ENCODE measurements at regions of chr1 and their contacts with region 1.

Region 1: DNA sequence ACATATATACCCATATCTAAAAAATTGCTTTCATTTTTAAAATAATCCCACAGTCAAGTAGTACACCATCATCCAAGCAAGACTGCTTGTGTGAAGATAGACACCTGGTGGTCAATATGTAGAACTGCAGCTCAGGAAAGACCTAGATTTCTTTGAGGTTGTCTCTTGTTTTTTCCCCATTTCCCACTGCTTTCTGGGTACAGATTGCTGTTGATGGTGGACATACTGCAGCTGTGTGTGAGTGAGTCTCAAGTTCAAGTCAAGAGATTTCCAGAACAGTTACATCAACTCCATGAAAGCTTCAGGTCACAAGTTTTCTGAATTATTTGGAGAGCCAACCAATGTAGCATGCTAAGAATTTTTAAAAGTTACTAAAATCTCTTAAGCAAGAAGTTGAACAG is 306.4 kb downstream of the DUSP10 start:
- DNase-seq: peak in 1 of 2 experiments; percentile 27
- H3K4me3 ChIP-seq: no peak overlapping the region
- H3K4me3 Mint-ChIP-seq: no peak overlapping the region
- H3K27ac Mint-ChIP-seq: no peak overlapping the region
- H3K4me1 ChIP-seq: no peaks in the 10 kb centered on the region
- H3K4me1 Mint-ChIP-seq: no peaks in the 10 kb centered on the region
- H3K27me3 ChIP-seq: no peaks in the 10 kb centered on the region
- H3K27me3 Mint-ChIP-seq: no peaks in the 10 kb centered on the region
- CTCF ChIP-seq: peak; percentile 88

Region 2: DNA sequence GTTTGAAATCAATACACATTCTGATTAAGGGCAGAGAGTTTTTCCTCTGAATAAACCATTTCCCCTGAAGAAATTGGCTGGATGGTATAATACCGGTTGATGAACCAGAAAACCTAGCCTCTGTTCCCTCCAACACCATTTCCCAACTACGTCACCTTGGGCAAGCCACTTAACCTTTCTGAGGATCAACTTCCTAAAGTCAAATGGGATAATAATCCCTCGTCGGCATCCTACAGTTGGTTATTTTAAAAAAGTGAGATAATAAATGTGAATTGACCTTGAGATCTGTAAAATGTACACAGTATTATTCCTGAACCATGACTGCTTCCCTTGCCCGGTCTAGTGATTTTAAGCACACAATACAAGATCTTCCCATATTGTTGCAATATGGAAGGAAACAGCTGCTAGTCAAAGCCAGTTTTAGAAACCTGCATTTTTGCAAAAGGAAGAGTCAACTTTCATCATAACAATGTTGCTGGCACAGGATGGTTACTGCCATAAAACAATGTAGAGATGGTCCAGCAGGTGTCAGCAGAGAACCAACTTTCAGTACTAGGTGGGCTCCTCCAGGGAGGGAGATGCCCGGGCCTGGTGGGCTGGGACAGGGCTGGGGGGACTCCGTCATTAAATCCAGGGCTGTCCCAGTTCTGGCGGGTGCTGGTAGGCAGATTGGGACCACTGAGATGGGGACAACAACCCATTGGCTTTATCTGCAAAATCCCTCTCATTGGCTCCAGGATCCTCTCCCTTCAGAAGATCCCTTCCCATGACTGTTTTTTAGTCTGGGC is 561.4 kb before region 1 on chr1:
- CTCF ChIA-PET with region 1: no interaction called
- POLR2A ChIA-PET with region 1: no interaction called
- intact Hi-C with region 1: loop called (anchors 1 kb)
- DNase-seq: peak in 1 of 2 experiments; percentile 39
- H3K4me3 ChIP-seq: no peak overlapping the region
- H3K4me3 Mint-ChIP-seq: no peak overlapping the region
- H3K27ac Mint-ChIP-seq: no peak overlapping the region
- H3K4me1 ChIP-seq: peaks cover 5% of the 10 kb centered on the region; the same call in 1 of the 2 replicates
- H3K4me1 Mint-ChIP-seq: no peaks in the 10 kb centered on the region
- H3K27me3 ChIP-seq: peaks cover 1% of the 10 kb centered on the region; the same call in 1 of the 2 replicates
- H3K27me3 Mint-ChIP-seq: peaks cover 16% of the 10 kb centered on the region
- CTCF ChIP-seq: peak; percentile 69 to 73

Region 3: DNA sequence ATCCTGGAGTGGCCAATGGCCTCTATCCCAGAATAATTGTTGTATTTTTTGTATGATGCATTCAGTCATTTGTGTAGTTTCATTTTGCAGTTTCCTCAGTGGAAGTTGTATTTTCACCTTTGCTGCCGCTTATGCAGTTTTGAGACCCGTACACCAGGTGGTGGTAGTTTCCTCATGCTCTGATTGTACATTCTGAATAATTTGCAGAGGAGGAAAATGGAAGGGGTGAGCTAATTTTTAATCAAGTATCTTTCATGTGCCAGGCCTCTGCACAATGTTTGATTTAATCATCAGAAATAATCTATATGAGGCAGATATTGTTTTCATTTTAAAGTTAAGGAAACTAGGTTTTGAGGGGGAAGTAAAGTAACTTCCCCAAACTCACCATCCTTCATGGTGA is 526.7 kb before region 1 on chr1:
- CTCF ChIA-PET with region 1: no interaction called
- POLR2A ChIA-PET with region 1: no interaction called
- intact Hi-C with region 1: loop called (anchors 1 kb)
- DNase-seq: no peak
- H3K4me3 ChIP-seq: no peak overlapping the region
- H3K4me3 Mint-ChIP-seq: no peak overlapping the region
- H3K27ac Mint-ChIP-seq: no peak overlapping the region
- H3K4me1 ChIP-seq: no peaks in the 10 kb centered on the region
- H3K4me1 Mint-ChIP-seq: no peaks in the 10 kb centered on the region
- H3K27me3 ChIP-seq: no peaks in the 10 kb centered on the region; the same call in 1 of the 2 replicates
- H3K27me3 Mint-ChIP-seq: peaks cover 15% of the 10 kb centered on the region
- CTCF ChIP-seq: peak; percentile 36 to 62

Region 4: GRCh38 chr1:221263831-221264767 is 171.4 kb before region 1 on chr1:
- CTCF ChIA-PET with region 1: interaction called, 51 read pairs
- POLR2A ChIA-PET with region 1: interaction called, 3 read pairs
- intact Hi-C with region 1: loop called (anchors 1 kb)
- DNase-seq: peak; percentile 64 to 69
- H3K4me3 ChIP-seq: no peak overlapping the region
- H3K4me3 Mint-ChIP-seq: no peak overlapping the region
- H3K27ac Mint-ChIP-seq: no peak overlapping the region
- H3K4me1 ChIP-seq: no peaks in the 10 kb centered on the region
- H3K4me1 Mint-ChIP-seq: no peaks in the 10 kb centered on the region
- H3K27me3 ChIP-seq: no peaks in the 10 kb centered on the region
- H3K27me3 Mint-ChIP-seq: peaks cover 8% of the 10 kb centered on the region
- CTCF ChIP-seq: peak; percentile 59 to 61

Region 5: DNA sequence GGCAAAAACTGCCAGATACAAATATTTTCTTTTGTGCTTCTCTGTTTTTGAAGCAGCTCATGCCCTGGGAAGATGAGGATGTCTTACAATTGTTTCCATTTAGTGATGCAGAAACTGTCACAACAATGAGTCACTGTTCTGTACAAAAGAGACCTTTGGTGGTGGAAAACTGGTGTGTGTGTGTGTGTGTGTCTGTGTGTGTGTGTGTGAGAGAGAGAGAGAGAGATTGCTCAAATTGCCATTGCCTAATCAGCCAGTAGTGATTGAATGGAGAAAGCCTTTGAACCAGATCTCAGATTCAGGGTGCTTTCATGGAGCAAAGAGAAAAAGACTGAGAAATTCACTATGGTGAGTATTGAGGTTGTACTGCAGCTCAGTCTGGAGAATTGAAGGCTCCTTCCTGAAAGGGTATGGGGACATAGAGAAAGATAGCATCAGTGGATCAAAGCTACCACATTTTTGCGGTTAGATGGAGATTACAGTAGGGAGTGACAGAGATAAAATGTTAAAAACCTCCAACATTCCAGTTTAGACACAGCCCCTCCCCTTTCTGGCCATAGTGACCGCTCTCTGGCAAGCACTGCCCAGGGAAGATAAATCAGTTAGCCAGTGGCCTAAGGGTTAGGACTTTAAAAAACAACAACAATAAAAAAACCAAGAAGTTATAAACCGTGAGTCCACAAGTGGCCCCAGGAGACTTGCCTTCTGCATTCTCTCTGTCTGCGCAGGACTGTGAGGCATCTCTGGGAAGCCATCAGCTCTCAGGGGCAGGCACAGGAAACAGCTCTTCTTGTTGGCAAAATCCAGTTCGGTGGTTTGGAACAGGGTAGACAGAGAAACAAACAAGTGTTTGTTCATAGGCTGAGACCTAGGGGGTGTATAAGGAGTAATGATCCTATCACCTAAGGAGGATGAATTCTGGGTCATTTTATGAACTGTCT is 100.1 kb before region 1 on chr1:
- CTCF ChIA-PET with region 1: no interaction called
- POLR2A ChIA-PET with region 1: no interaction called
- intact Hi-C with region 1: loop called (anchors 1 kb)
- DNase-seq: peak; percentile 80 to 84
- H3K4me3 ChIP-seq: no peak overlapping the region
- H3K4me3 Mint-ChIP-seq: peak overlapping the region; percentile 7
- H3K27ac Mint-ChIP-seq: peak overlapping the region; percentile 73
- H3K4me1 ChIP-seq: peaks cover 27% of the 10 kb centered on the region
- H3K4me1 Mint-ChIP-seq: peaks cover 25% of the 10 kb centered on the region
- H3K27me3 ChIP-seq: no peaks in the 10 kb centered on the region
- H3K27me3 Mint-ChIP-seq: no peaks in the 10 kb centered on the region
- CTCF ChIP-seq: no peak

Region 6: GRCh38 chr1:221356693-221357092 is 78.8 kb before region 1 on chr1:
- CTCF ChIA-PET with region 1: no interaction called
- POLR2A ChIA-PET with region 1: no interaction called
- intact Hi-C with region 1: no loop called
- DNase-seq: no peak
- H3K4me3 ChIP-seq: no peak overlapping the region
- H3K4me3 Mint-ChIP-seq: no peak overlapping the region
- H3K27ac Mint-ChIP-seq: no peak overlapping the region
- H3K4me1 ChIP-seq: no peaks in the 10 kb centered on the region
- H3K4me1 Mint-ChIP-seq: no peaks in the 10 kb centered on the region
- H3K27me3 ChIP-seq: no peaks in the 10 kb centered on the region
- H3K27me3 Mint-ChIP-seq: peaks cover 5% of the 10 kb centered on the region
- CTCF ChIP-seq: peak in 1 of 2 experiments; percentile 25

Measured in Caco-2 (cell line).